ENCODE measurements at regions of chr15 and their contacts with region 1.

Region 1: DNA sequence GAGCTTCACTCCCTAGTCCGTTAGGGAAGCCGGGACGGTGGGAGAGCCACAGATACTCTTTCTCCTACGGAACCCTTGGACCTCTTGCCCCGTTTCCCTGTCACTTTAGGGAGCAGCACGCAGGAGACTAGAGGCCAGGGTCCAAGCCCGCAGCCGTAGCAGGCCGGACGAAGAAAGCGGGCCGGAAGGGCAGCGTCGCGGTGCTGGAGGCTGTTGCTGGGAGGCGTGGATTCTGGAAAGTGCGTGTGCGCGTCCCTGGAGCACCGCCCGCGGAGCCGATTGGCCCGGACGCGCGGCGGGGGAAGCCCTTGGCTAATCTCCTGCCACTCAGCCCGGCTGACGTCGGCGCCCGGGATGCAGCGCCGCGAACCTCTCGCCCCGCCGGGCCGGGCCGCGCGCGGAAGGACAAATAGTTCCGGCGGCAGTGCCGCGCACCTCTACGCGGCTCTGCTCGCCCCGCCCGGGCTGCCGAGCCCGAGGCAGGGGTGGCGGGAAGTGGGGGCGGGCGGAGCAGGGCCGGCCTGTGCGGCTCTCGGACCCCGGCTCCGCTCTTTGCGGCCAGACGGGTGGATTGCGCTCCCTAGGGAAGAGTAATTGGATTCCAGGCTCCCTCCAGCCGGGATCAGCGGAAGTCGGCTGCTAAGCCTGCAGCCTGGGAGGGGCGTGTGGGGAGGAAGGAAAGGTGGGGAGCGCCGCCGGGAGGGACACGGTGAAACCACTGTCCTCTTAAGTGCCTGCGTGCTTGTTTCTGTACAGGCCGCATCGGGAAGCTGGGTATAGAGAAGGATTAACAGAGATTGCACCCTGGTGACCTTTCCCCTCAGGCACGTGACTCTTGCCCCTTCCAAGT is 31.3 kb upstream of the TCF12 start:
- DNase-seq: peak; percentile 96
- ATAC-seq: peak; percentile 98

Region 2: GRCh38 chr15:56786966-56787365 is 100.2 kb before region 1 on chr15:
- intact Hi-C with region 1: no loop called
- DNase-seq: no peak
- ATAC-seq: no peak

Region 3: DNA sequence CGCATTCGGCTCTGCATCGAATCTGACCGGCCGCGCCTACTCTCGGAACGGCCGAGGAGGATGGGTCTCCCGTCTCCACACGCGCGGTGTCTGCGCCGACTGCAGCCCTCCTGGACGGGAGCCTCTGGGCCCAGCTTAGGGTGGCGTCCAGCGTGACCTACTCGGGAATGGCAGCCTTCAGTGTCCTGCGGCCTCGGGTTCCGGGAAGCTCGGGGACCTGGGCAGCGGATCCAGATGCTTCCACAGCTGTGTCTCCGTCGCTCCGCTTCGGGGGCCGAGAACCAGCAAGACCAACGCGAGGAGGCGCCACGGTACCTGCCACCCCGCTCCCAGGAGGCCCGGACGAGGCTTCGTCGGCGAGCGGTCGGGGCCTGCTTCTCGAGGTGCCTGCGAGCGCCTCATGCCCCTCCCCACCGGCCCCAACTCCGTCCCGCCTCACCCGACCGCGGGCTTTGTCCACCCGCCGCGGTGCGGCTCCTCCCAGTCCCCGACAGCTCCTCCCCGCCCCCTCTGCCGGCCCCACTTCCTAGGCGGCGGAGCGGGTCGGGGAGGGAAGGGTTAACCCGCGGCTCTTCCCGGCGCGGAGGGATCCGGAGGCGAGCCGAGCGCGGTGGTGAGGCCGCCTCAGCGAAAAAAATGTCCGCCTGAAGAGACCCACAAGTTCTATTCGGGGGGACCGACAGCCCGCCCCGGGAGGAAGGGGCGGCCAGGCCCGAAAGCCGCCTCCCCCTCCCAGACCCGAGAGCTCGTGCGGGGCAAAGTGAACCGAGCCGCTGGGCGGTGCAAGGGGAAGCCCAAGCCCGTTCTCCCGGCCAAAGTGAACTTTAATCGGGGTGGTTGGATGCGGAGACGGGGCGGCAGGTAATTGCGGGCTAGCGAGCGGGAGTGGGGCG is 31.1 kb after region 1 on chr15 and contains the start of gene TCF12:
- intact Hi-C with region 1: loop called in 1 of 2 experiments (anchors 1 kb)
- DNase-seq: peak; percentile 96
- ATAC-seq: peak; percentile 95 to 98
- total RNA-seq, gene TCF12: 44.0 to 53.9 TPM

Region 4: GRCh38 chr15:56964182-56964581 is 77.0 kb after region 1 on chr15:
- intact Hi-C with region 1: no loop called
- DNase-seq: no peak
- ATAC-seq: peak in 1 of 2 donors; percentile 23